Motor neuron (in vitro differentiated cells): ENCODE measurements at regions of chr4 and their contacts with region 1.

Region 1: DNA sequence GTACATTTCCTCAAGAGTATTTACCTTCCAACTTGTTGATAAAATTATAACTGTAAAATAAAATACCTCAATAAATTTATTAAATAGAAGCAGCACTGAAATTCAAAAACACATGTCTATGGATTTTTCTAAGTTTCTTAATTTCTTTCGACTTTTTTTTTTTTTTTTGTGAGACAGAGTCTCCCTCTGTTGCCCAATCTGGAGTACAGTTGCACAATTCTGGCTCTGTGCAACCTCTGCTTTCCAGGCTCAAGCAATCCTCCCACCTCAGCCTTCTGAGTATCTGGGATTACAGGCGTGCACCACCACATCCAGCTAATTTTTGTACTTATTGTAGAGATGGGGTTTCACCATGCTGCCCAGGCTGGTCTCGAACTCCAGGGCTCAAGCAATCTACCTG is 79.8 kb downstream of the IQCM start:
- ATAC-seq: peak in 2 of 8 experiments; percentile 34 to 39
- H3K4me3 ChIP-seq: no peak overlapping the region
- H3K27ac ChIP-seq: no peak overlapping the region
- H3K4me1 ChIP-seq: no peaks in the 10 kb centered on the region

Region 2: DNA sequence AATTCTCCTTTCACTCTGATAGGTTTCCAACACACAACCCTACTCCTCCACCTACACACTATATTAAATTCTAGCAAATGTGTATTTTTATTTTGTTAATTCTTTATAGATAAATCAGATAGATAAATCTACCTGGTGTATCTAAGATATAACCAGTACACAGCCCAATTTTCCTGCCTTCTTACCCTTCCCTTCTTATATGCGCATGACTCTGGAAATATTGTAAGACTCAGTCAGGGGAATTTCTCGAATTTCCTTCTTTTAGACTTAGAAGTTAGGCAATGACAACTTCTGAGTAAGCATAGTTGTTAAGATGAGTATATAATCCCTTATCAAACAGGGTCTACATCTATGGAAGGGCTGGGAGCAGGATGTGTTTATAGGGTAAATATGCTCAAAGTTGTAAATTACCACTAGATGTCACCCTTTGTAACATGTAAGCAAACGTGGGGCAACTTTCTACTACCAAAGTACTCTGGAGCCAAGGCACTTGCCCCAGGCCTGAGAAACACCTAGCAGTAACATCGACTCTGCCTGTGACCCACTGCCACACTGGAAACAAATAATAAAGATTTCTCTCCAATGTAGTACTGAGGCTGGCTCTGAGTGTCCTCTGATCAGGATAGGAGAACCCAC is 364.9 kb before region 1 on chr4:
- in situ Hi-C with region 1: loop called in 1 of 9 experiments (anchors 25 kb)
- ATAC-seq: peak in 4 of 8 experiments; percentile 54 to 88 (median 84)
- H3K4me3 ChIP-seq: no peak overlapping the region
- H3K27ac ChIP-seq: no peak overlapping the region
- H3K4me1 ChIP-seq: no peaks in the 10 kb centered on the region